ENCODE measurements at regions of chr15 and their contacts with region 1.

Region 1: DNA sequence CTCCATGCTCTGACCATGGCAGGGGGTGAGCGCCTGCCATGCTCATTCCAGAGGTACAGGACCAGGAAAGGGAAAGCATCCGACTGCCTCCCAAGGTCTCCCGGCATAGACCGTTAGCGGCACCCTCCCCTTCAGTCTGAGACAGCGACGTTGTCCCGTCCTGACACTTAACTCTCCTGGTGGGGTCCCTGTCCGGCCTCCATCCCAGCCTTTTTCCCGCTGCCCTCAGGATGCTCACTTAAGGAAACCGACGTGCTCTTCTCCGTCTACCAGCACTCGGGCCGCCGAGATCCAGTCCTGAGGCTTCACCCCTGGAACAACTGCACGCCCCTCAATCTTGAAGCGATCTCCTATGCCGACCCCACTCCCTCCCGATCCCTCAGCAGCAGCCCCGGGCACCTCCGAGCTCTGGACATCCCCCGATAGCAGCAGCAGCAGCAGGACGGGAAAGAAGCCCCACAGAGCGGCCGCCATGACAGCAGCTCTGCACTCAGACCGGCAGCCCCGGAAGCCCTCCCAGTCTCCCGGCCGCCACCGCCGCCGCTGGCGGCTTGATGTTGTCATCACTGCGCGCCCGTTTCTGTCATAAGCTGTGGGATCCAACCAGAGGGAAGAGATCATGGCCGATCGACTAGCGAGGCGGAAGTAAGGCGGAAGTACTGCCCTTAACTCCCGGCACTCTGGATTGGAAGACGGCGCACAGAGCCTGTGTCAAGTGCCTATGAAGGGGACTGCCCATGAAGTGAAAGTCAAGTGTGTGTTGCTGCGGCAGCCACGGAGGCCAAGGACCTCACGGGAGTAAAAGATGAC is at the starts of genes EMC7 and PGBD4:
- DNase-seq: peak; percentile 98 to 99
- H3K4me3 ChIP-seq: peak within 1 kb of the TSS; percentile 79 to 95 (median 81)
- H3K27ac ChIP-seq: peak within 1 kb of the TSS; percentile 87 to 92
- H3K4me1 ChIP-seq: peaks cover 0 to 11% of the 10 kb centered on the region in 2 donors
- H3K27me3 ChIP-seq: no peaks in the 10 kb centered on the region
- CTCF ChIP-seq: no peak
- POLR2A ChIP-seq: peak; percentile 68
- total RNA-seq, gene EMC7: 35.0 to 47.5 (median 44.6) TPM
- total RNA-seq, gene PGBD4: 0.64 to 1.6 (median 1.3) TPM

Region 2: GRCh38 chr15:34223904-34224596 is 122.5 kb after region 1 on chr15:
- intact Hi-C with region 1: loop called (anchors 10 kb)
- DNase-seq: no peak
- H3K4me3 ChIP-seq: peak overlapping the region; percentile 55 to 98 (median 94)
- H3K27ac ChIP-seq: peak overlapping the region; percentile 86 to 95
- H3K4me1 ChIP-seq: no peaks in the 10 kb centered on the region
- H3K27me3 ChIP-seq: no peaks in the 10 kb centered on the region
- CTCF ChIP-seq: no peak
- POLR2A ChIP-seq: no peak